Prostate gland (tissue), 2 donors: ENCODE measurements at regions of chr3 and their contacts with region 1.

Region 1: GRCh38 chr3:124492811-124493210 is 237.4 kb upstream of the UMPS start:
- DNase-seq: peak; percentile 38
- H3K4me3 ChIP-seq: no peak overlapping the region
- H3K27ac ChIP-seq: no peak overlapping the region
- H3K4me1 ChIP-seq: no peaks in the 10 kb centered on the region
- H3K27me3 ChIP-seq: no peaks in the 10 kb centered on the region
- CTCF ChIP-seq: peak in 3 of 4 experiments; percentile 36 to 51 (median 45)
- POLR2A ChIP-seq: no peak

Region 2: GRCh38 chr3:124217542-124217941 is 275.3 kb before region 1 on chr3:
- intact Hi-C with region 1: no loop called
- DNase-seq: no peak
- H3K4me3 ChIP-seq: no peak overlapping the region
- H3K27ac ChIP-seq: no peak overlapping the region
- H3K4me1 ChIP-seq: no peaks in the 10 kb centered on the region
- H3K27me3 ChIP-seq: no peaks in the 10 kb centered on the region
- CTCF ChIP-seq: no peak
- POLR2A ChIP-seq: no peak

Region 3: GRCh38 chr3:124552239-124552638 is 59.4 kb after region 1 on chr3:
- intact Hi-C with region 1: loop called (anchors 2 kb)
- DNase-seq: peak; percentile 37
- H3K4me3 ChIP-seq: no peak overlapping the region
- H3K27ac ChIP-seq: no peak overlapping the region
- H3K4me1 ChIP-seq: no peaks in the 10 kb centered on the region
- H3K27me3 ChIP-seq: no peaks in the 10 kb centered on the region
- CTCF ChIP-seq: no peak
- POLR2A ChIP-seq: no peak

Region 4: GRCh38 chr3:124584552-124585391 is 92.0 kb after region 1 on chr3:
- intact Hi-C with region 1: no loop called
- DNase-seq: peak; percentile 66
- H3K4me3 ChIP-seq: peak overlapping the region; percentile 34 to 40
- H3K27ac ChIP-seq: peak overlapping the region in 1 of 2 donors; percentile 18
- H3K4me1 ChIP-seq: no peaks in the 10 kb centered on the region
- H3K27me3 ChIP-seq: no peaks in the 10 kb centered on the region
- CTCF ChIP-seq: no peak
- POLR2A ChIP-seq: peak; percentile 58